ENCODE measurements at regions of chr11 and their contacts with region 1.

Region 1: GRCh38 chr11:76919887-76920746 is 59.4 kb downstream of the ACER3 start:
- DNase-seq: peak; percentile 58
- H3K4me3 Mint-ChIP-seq: no peak overlapping the region
- H3K27ac Mint-ChIP-seq: no peak overlapping the region
- H3K4me1 Mint-ChIP-seq: peaks cover 12% of the 10 kb centered on the region
- H3K27me3 Mint-ChIP-seq: no peaks in the 10 kb centered on the region

Region 2: GRCh38 chr11:76721755-76722677 is 198.1 kb before region 1 on chr11:
- CTCF ChIA-PET with region 1: interaction called, 18 read pairs
- POLR2A ChIA-PET with region 1: no interaction called
- DNase-seq: peak; percentile 79
- H3K4me3 Mint-ChIP-seq: no peak overlapping the region
- H3K27ac Mint-ChIP-seq: no peak overlapping the region
- H3K4me1 Mint-ChIP-seq: peaks cover 7% of the 10 kb centered on the region
- H3K27me3 Mint-ChIP-seq: peaks cover 28% of the 10 kb centered on the region

Region 3: GRCh38 chr11:76807206-76807875 is 112.8 kb before region 1 on chr11:
- CTCF ChIA-PET with region 1: interaction called, 110 read pairs
- POLR2A ChIA-PET with region 1: interaction called, 3 read pairs
- DNase-seq: peak; percentile 73
- H3K4me3 Mint-ChIP-seq: no peak overlapping the region
- H3K27ac Mint-ChIP-seq: no peak overlapping the region
- H3K4me1 Mint-ChIP-seq: peaks cover 40% of the 10 kb centered on the region
- H3K27me3 Mint-ChIP-seq: peaks cover 2% of the 10 kb centered on the region

Region 4: DNA sequence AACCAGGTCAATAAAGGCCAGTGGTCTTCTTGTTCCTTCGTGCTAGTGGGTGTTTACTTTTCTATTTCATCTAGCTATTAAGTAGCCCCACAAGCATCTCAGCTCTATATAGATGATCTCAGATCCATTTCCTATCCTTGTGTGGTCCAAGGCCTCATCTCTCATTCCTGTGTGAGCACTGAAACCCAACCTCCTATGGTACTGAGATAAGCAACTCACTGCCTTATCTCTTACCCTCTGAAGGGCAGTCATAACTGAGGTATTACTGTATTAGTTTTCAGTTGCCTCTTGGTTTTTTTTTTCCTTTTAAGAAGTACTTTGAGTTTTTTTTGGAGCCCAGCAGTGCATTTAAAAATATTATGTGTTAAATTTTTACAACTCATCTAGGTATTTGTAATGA is 31.1 kb before region 1 on chr11:
- CTCF ChIA-PET with region 1: interaction called, 10 read pairs
- POLR2A ChIA-PET with region 1: no interaction called
- DNase-seq: no peak
- H3K4me3 Mint-ChIP-seq: no peak overlapping the region
- H3K27ac Mint-ChIP-seq: no peak overlapping the region
- H3K4me1 Mint-ChIP-seq: peaks cover 20% of the 10 kb centered on the region
- H3K27me3 Mint-ChIP-seq: no peaks in the 10 kb centered on the region

Region 5: DNA sequence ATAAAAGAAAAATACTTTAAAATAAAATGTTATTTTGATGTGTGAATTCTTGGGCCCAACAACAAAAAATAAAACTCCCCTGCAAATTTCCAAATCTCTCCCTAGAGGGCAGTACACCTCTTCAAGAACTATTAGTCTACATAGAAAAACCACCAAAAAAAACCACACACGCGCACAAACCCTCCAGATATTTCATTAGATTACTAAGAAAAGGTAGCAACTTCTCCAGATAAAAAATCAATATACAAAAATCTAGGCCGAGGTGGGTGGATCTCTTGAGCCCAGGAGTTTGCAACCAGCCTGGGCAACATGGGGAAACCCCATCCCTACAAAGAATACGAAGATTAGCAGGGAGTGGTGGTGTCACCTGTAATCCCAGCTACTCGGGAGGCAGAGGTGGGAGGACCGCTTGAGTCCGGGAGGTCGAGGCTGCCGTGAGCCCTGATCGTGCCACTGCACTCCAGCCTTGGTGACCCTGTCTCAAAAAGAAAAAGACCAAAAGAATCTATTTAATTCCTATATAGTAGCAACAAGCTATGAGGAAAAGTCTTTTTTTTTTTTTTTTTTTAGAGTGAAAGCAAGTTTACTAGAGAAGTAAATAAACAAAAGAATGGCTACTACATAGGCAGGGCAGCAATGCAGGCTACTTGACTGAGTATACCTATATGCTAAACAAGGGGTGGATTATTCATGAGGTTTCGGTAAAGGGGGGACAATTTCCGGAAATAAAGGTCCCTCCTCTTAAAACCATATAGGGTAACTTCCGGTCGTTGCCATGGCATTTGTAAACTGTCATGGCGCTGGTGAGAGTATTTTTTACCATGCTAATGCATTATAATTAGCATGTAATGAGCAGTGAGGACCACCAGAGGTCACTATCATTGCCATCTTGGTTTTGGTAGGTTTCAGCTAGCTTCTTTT is 127.2 kb after region 1 on chr11:
- CTCF ChIA-PET with region 1: interaction called, 12 read pairs
- POLR2A ChIA-PET with region 1: no interaction called
- DNase-seq: peak; percentile 79
- H3K4me3 Mint-ChIP-seq: peak overlapping the region; percentile 47
- H3K27ac Mint-ChIP-seq: peak overlapping the region; percentile 47
- H3K4me1 Mint-ChIP-seq: peaks cover 14% of the 10 kb centered on the region
- H3K27me3 Mint-ChIP-seq: peaks cover 21% of the 10 kb centered on the region

Measured in activated CD4-positive, alpha-beta memory T cell treated with anti-CD3 and anti-CD28 coated beads, Interleukin-2, amount 10 ng/mL, durations not matched to agents 7 days and 5 days (primary cell).